Left ventricle myocardium superior (tissue), 1 donor: ENCODE measurements at regions of chr21 and their contacts with region 1.

Region 1: GRCh38 chr21:15729674-15730483 is at the start of gene USP25:
- DNase-seq: peak; percentile 97
- ATAC-seq: peak; percentile 98
- total RNA-seq, gene USP25: 46.0 TPM

Region 2: DNA sequence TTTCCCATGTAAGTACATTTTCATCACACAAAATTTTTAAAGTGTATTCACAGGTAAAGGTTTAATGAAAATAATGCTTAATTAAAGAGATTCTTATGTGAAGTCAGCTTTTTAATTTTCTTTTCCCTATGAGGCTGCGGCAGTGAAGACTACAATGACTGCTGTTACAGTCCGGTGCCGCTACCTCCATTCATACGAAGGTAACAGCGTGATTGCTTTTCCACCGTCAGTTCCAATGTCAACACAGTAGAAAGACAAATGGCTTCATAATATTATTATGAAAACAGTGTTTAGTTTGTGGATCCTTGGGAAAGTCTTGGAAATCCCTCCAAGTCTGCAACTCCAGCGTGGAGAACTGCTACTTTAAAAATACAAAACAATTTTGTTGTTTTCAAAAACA is 410.2 kb before region 1 on chr21:
- intact Hi-C with region 1: no loop called
- DNase-seq: no peak
- ATAC-seq: no peak

Region 3: DNA sequence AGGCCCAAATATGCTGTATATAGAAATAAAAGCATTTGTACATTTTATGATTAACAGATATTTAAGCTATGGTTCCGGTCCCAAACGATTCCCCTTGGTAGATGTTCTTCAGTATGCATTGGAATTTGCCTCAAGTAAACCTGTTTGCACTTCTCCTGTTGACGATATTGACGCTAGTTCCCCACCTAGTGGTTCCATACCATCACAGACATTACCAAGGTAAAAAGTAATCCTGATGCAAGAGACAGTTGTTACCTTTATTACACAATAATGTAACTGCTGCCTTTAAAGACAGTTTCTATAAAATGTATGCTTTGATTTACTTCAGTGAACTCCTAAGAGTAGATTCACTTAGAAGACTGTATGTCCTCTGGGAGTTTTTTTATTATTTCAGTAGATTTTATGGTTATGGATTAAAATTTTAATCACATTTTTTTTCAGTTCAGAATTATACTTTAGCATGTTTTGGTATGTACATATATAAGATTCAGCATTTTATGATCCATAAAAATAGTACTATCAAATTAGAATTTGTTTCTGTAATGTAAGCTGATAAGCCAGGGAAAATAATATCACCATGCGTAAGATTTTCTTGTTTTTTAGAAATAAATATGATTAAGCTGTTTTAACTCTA is 96.4 kb after region 1 on chr21:
- intact Hi-C with region 1: loop called (anchors 10 kb)
- DNase-seq: no peak
- ATAC-seq: peak; percentile 83